Activated naive CD4-positive, alpha-beta T cell treated with anti-CD3 and anti-CD28 coated beads for 36 hours (primary cell): ENCODE measurements at regions of chr15 and their contacts with region 1.

Region 1: DNA sequence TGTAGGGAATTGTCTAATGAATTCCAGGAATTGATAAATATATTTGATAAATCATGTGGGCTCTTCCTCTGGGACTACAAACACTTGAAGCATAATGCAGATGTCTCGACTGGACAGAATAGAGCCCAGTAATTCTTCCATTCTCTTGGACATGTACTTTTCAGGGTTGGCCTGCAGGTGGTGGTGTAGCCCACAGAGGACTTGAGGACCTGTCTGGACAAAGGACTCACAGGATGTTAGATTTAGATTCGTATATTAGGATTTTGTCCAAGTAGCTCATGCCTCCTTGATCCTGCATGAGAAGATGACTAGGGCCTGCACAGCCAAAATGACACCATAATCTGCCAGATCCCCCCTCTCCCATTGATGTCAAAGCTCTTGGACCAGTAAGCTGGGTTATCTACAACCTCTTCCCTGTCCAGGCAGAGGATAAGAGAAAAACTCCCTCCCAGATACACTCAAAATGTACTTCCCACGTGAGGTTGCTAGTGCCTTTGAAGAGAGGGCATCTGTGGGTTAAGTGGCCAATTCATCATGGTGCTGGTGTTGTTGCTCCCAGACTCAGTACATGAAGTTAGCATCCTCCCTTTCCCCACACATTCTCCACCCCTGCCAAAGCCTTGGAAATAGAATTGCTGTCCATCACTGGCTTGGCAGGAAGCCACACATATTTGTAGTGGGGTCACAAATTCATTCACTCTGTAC is 88.6 kb upstream of the ZNF280D start:
- DNase-seq: peak; percentile 61
- H3K4me3 Mint-ChIP-seq: no peak overlapping the region
- H3K27ac Mint-ChIP-seq: no peak overlapping the region
- H3K4me1 Mint-ChIP-seq: no peaks in the 10 kb centered on the region
- H3K27me3 Mint-ChIP-seq: no peaks in the 10 kb centered on the region

Region 2: DNA sequence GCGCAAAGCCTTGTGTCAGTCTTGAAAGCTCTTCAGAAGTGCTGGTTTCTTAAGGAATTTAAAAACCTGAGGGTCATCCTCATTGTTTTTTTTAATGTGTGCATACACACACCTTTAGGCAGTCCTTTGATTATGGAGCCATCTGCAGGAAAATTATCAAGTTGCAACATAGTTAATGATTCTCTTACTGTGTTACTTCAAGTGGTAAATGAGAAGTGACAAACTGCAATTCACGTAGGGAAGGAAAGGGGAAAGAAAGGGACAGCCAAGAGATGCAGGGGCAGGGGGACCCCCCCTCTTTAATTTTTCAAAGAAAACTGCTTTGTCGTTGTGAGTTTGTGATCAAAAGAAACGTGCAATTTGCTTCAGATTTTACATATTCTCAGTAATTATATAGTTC is 392.0 kb after region 1 on chr15:
- CTCF ChIA-PET with region 1: no interaction called
- intact Hi-C with region 1: loop called (anchors 10 kb)
- DNase-seq: no peak
- H3K4me3 Mint-ChIP-seq: no peak overlapping the region
- H3K27ac Mint-ChIP-seq: no peak overlapping the region
- H3K4me1 Mint-ChIP-seq: peaks cover 25% of the 10 kb centered on the region
- H3K27me3 Mint-ChIP-seq: no peaks in the 10 kb centered on the region